ENCODE measurements at regions of chr3 and their contacts with region 1.

Region 1: DNA sequence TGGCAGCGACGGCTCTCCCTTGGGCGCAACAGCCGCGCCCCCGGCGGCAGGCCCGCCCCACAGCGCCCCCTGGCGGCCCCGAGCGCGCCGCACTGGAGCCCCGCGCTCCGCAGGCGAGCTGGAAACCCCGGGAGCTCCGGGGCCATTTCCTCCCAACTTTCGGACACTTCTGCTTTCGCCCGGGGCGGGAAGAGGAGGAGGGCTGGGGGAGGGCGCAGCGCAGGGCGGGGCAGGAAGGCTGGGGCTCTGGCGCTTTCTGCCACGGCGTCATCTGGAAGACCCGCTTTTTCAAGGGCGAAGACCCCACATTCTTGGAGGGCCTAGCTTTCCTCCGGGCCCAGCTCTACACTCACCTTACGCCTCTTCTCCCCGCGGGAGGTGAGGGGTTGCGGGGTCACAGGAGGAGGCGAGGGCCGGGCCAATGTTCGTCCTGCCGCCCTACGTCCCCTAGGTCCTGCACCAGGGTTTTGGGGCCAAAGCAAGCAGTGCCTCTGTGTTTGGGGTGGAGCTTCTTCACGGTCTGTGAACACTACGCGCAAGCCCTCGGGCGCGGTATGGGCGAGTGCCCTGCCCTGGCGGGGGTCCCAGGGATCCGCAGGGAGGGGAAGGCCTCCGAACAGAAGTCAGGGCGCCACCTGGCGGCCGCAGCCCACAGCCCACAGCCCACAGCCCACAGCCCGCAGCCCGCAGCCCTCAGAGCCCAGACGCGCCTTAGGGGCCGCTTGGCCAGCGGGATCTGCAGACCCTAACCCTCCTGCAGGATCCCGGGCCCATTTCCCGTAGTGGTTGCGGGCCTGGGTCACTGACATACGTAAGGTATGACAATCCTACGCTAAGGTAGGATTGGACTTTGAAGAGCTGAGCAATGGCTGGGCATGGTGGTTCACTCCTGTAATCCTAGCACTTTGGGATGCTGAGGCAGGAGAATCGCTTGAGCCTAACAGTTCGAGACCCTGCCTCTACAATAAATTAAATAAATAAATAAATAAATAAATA is 31.1 kb downstream of the FOXL2 start:
- DNase-seq: peak; percentile 61
- ATAC-seq: peak; percentile 87
- H3K4me3 ChIP-seq: peak overlapping the region; percentile 71 to 73
- H3K27ac ChIP-seq: peak overlapping the region; percentile 85
- H3K4me1 ChIP-seq: peaks cover 13 to 15% of the 10 kb centered on the region in 2 experiments; a peak in 3 of 4 replicates
- H3K27me3 ChIP-seq: no peaks in the 10 kb centered on the region
- CTCF ChIP-seq: peak in 2 of 3 experiments; percentile 79 to 82; a peak in 4 of 6 replicates
- POLR2A ChIP-seq: no peak
- RAD21 ChIP-seq: no peak

Region 2: DNA sequence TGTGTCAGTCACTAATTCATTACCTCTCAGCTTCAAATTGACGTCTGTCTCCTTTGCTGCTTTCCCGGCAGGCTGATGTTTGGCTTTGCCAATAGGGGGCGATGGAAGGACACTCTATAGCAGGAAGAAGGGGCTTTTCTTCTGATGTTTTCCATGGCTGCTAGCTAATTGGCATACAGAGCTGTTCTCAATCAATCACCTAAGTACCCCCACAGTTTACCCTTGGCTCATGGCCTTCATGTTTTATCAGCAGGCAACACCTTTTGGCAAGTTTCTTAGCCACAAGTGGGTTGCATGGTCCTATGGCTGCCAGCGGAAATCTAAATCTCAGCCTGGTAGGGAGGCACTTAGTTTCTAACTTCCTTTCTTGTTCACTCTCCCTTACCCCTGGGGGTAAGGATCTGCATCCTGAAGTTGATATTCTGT is 436.4 kb before region 1 on chr3:
- CTCF ChIA-PET with region 1: interaction called, 32 read pairs
- POLR2A ChIA-PET with region 1: interaction called, 3 read pairs
- RAD21 ChIA-PET with region 1: interaction called in 1 of 2 experiments, 3 read pairs
- intact Hi-C with region 1: no loop called
- DNase-seq: peak; percentile 35
- ATAC-seq: peak; percentile 87
- H3K4me3 ChIP-seq: no peak overlapping the region
- H3K27ac ChIP-seq: no peak overlapping the region
- H3K4me1 ChIP-seq: no peaks in the 10 kb centered on the region
- H3K27me3 ChIP-seq: no peaks in the 10 kb centered on the region
- CTCF ChIP-seq: peak; percentile 65 to 97 (median 91); a peak in 5 of 6 replicates
- POLR2A ChIP-seq: no peak
- RAD21 ChIP-seq: peak; percentile 80

Region 3: DNA sequence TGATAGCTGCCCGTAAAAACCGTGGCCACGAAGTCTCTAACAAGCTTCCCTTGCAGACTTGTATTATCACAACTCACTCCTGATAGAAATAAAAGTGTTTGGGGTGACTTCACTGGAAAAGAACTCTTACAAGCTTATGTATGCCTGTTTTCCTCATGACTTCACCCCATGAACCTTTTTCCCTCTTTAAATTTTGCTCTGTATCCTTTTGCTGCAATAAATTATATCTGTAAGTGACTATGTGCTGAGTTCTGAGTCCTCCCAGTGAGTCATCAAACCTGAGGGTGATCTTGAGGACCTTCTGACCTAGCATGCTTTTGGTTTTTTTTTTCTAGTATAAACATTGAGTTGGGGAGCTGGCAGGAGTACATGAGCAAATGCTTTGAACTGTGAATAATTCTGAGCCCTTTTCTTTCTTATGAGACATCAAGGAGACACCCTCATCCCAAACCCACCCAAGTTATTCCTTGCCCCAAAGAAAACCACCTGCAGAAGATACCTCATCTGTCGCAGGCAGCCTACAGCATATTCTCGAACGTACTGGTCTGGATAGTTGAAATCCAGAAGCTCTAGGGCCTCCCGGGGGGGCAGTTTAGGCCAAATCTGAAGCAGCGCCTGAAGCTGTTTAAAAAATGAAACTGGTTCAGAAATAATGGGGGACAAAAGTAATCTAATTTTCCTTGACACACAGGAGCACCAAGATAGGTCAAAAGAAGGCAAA is 221.4 kb before region 1 on chr3:
- CTCF ChIA-PET with region 1: interaction called, 165 read pairs
- POLR2A ChIA-PET with region 1: interaction called, 3 read pairs
- RAD21 ChIA-PET with region 1: interaction called, 11 to 12 read pairs
- intact Hi-C with region 1: loop called (anchors 1 kb)
- DNase-seq: peak; percentile 47
- ATAC-seq: peak; percentile 84
- H3K4me3 ChIP-seq: no peak overlapping the region
- H3K27ac ChIP-seq: peak overlapping the region; percentile 44; the same call in 1 of the 2 replicates
- H3K4me1 ChIP-seq: peaks cover 13 to 14% of the 10 kb centered on the region in 2 experiments
- H3K27me3 ChIP-seq: no peaks in the 10 kb centered on the region
- CTCF ChIP-seq: no peak
- POLR2A ChIP-seq: no peak
- RAD21 ChIP-seq: no peak

Region 4: GRCh38 chr3:138834359-138835212 is 81.2 kb before region 1 on chr3 and contains the start of gene PIK3CB:
- CTCF ChIA-PET with region 1: interaction called, 4 read pairs
- POLR2A ChIA-PET with region 1: no interaction called
- RAD21 ChIA-PET with region 1: interaction called in 1 of 2 experiments, 4 read pairs
- intact Hi-C with region 1: loop called (anchors 5 kb)
- DNase-seq: peak; percentile 44
- ATAC-seq: peak; percentile 94
- H3K4me3 ChIP-seq: peak within 1 kb of the TSS; percentile 67 to 71
- H3K27ac ChIP-seq: peak within 1 kb of the TSS; percentile 93
- H3K4me1 ChIP-seq: peaks cover 9 to 19% of the 10 kb centered on the region in 2 experiments
- H3K27me3 ChIP-seq: no peaks in the 10 kb centered on the region
- CTCF ChIP-seq: peak in 2 of 3 experiments; percentile 32 to 50; a peak in 4 of 6 replicates
- POLR2A ChIP-seq: peak; percentile 93
- RAD21 ChIP-seq: peak; percentile 37
- total RNA-seq, gene PIK3CB: 44.3 TPM

Region 5: DNA sequence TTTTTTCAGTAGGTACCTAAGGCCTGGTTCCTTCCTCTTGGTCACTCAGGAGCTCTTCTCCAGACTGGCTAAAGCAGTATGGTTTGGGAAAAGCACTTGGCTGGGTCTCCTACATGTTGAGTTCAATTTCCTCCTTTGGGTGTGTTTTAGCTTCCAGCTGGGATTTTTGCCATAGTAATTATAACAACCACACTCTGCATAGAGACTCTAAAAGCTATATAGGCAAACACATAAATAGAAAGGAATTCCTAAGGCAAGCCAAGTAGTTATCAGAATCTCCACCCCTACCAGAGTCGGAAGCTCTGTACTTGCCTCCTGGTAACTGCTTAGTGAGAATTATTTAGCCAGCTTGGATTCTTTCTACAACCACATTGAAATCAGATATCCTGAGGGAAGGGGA is 17.5 kb before region 1 on chr3:
- CTCF ChIA-PET with region 1: interaction called, 40 read pairs
- POLR2A ChIA-PET with region 1: no interaction called
- RAD21 ChIA-PET with region 1: no interaction called
- intact Hi-C with region 1: no loop called
- DNase-seq: no peak
- ATAC-seq: no peak
- H3K4me3 ChIP-seq: no peak overlapping the region
- H3K27ac ChIP-seq: no peak overlapping the region
- H3K4me1 ChIP-seq: no peaks in the 10 kb centered on the region
- H3K27me3 ChIP-seq: no peaks in the 10 kb centered on the region
- CTCF ChIP-seq: no peak
- POLR2A ChIP-seq: no peak
- RAD21 ChIP-seq: no peak

Region 6: DNA sequence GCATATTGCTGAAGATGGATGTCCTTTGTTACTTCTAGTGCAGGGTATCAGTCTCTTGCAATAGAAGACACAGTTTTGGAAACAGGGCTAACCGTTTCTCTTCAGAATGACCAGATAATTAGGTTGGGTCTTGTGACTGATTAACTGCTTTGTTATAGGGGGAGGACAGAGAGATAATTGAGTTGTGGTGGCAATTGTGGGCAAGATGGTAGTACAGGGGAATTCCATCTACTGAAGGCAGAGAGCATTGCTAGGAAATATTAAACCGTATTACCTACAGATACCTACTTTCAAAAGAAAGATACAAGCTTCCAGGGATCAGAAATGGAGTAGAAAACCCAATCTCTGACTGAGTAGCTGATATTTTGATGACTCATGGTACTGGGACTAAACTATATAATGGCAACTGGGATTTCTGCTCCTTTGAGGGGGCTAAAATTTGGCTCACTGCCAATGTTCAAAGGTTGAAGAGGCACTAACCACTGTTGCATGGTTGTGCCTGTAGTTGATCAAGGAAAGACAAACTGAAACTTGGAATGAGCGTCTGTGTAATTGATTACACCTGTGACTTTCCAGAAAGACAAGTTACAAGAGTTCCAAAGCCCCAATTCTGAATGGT is 100.7 kb after region 1 on chr3:
- CTCF ChIA-PET with region 1: no interaction called
- POLR2A ChIA-PET with region 1: no interaction called
- RAD21 ChIA-PET with region 1: no interaction called
- intact Hi-C with region 1: no loop called
- DNase-seq: no peak
- ATAC-seq: no peak
- H3K4me3 ChIP-seq: no peak overlapping the region
- H3K27ac ChIP-seq: no peak overlapping the region
- H3K4me1 ChIP-seq: no peaks in the 10 kb centered on the region
- H3K27me3 ChIP-seq: no peaks in the 10 kb centered on the region
- CTCF ChIP-seq: no peak
- POLR2A ChIP-seq: no peak
- RAD21 ChIP-seq: no peak

Region 7: DNA sequence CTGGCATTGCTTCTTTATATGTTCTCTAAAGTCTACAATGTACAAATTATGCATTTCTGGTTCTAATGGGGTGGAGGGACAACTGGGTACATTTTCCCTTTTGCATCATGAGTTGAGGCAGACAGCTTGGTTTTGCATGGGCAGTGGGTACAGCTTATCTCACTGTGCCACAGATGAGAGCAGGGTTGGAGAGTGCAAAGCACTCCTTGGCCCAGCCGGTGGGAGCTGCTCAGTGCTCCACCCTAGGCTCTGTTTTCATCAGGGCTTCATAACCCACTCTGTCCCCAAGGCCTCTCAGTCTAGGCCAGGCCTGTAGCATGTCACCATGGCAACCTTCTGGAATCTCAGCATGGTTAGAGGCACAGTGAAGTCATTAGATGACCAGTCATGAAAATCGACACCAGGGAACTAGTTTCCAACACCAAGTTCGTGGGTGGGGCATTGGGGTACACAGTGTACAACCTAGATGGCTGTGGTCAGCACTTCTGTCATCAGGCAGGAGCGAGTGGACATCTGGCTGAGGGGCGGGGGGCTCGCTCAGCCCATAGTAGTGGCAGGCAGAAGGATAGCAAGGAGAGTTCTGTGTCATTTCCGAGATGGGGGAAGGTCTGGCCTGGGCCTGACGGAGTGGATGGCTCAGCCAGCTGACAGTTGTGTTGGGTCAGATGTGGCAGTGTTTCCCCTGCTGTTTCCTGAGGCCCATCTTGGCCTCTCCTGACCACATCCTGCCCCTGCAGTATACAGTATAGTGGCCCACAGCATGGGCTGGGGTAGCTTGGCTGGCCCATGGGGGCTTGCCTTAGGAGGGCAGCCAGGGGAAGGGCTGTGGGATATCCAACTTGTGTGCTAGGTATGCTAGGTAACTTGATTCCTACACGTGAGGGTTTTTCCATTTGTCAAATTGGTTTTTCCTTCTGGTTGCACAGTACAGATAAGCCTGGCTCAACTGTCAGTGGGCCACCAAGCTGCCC is 204.6 kb after region 1 on chr3:
- CTCF ChIA-PET with region 1: no interaction called
- POLR2A ChIA-PET with region 1: no interaction called
- RAD21 ChIA-PET with region 1: no interaction called
- intact Hi-C with region 1: no loop called
- DNase-seq: peak; percentile 21
- ATAC-seq: peak; percentile 58
- H3K4me3 ChIP-seq: no peak overlapping the region
- H3K27ac ChIP-seq: peak overlapping the region; percentile 14; the same call in 1 of the 2 replicates
- H3K4me1 ChIP-seq: peaks cover 21 to 47% of the 10 kb centered on the region in 2 experiments
- H3K27me3 ChIP-seq: no peaks in the 10 kb centered on the region
- CTCF ChIP-seq: no peak
- POLR2A ChIP-seq: no peak
- RAD21 ChIP-seq: no peak

Region 8: DNA sequence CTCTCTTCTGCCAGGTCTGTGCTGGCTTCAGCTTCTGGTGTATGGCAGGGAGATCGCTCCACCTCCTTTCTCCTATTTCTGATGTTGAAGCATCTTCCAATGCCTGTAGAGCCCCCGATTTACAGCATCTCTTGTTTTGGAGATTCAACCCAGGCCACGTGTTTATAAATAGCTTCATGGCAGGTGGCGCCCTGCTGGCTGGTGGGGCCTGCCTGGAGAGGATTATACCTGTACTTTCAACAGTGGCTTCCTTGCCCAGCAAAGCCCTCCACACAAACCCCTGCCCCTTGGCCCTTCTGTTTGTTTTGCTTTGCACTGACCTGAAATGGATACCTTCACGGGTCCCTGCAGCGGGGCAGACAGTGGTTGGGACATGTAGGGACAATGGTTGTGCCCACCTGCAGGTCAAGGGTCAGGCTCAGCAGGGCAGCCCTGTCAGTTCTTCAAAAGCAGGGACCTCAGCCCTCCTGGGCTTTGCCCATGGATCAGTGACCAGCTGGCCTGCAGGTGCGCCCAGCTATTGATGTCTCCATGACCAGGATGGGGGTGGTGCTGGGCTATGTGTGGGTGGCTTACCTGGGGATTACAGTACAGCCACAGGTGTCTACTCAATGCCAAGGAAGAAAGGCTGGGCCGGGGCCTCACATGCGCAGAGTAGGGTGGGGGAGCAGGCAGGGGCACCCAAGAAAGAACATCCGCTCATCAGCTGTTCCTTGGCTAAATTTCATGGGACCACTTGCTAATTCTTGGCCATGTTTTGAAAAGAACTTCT is 241.5 kb after region 1 on chr3:
- CTCF ChIA-PET with region 1: no interaction called
- POLR2A ChIA-PET with region 1: no interaction called
- RAD21 ChIA-PET with region 1: no interaction called
- intact Hi-C with region 1: no loop called
- DNase-seq: no peak
- ATAC-seq: no peak
- H3K4me3 ChIP-seq: no peak overlapping the region
- H3K27ac ChIP-seq: no peak overlapping the region
- H3K4me1 ChIP-seq: no peaks in the 10 kb centered on the region; a peak in 1 of 4 replicates
- H3K27me3 ChIP-seq: no peaks in the 10 kb centered on the region
- CTCF ChIP-seq: no peak
- POLR2A ChIP-seq: no peak
- RAD21 ChIP-seq: no peak

Region 9: DNA sequence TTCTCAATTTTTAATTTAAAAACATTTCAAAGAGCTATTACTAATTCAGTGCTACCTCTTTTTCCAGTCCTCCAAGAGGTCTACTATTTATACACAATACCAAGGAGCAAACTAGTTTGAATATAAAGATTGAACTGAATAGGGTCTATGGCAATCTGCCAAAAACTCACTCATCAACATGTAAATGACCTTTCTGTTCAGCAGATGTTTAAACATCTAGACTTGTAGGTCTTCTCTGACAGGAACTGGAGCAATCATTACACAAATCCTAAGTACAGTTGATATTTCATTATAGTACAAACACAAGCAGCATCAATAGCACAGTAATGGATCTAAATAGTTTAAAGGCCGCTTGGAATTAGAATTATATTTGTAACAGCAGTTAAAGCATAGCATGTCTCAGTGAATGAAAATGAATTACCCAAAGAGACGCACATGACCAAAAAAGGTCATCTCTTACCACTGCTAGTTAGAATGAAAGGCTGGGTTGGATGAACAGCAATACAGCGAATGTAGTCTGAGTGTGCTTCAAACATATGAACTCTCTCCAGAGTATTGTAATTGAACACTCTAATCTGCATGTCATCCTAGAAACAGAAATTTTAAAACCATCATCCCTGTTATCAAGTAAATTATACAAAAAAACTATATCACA is 462.9 kb after region 1 on chr3:
- CTCF ChIA-PET with region 1: no interaction called
- POLR2A ChIA-PET with region 1: no interaction called
- RAD21 ChIA-PET with region 1: no interaction called
- intact Hi-C with region 1: no loop called
- DNase-seq: no peak
- ATAC-seq: no peak
- H3K4me3 ChIP-seq: no peak overlapping the region
- H3K27ac ChIP-seq: no peak overlapping the region
- H3K4me1 ChIP-seq: no peaks in the 10 kb centered on the region
- H3K27me3 ChIP-seq: no peaks in the 10 kb centered on the region
- CTCF ChIP-seq: no peak
- POLR2A ChIP-seq: no peak
- RAD21 ChIP-seq: no peak